ENCODE measurements at regions of chr10 and their contacts with region 1.

Region 1: GRCh38 chr10:22648547-22648961 is 65.8 kb downstream of the PIP4K2A start:
- DNase-seq: peak in 3 of 14 experiments; percentile 50 to 60 (median 53)
- ATAC-seq: no peak
- H3K4me3 ChIP-seq: no peak overlapping the region
- H3K4me3 Mint-ChIP-seq: peak overlapping the region; percentile 68
- H3K27ac ChIP-seq: peak overlapping the region; percentile 55 to 58
- H3K27ac Mint-ChIP-seq: peak overlapping the region; percentile 91
- H3K4me1 ChIP-seq: peaks cover 91% of the 10 kb centered on the region
- H3K4me1 Mint-ChIP-seq: peaks cover 91% of the 10 kb centered on the region
- H3K27me3 ChIP-seq: no peaks in the 10 kb centered on the region
- H3K27me3 Mint-ChIP-seq: no peaks in the 10 kb centered on the region
- CTCF ChIP-seq: no peak

Region 2: GRCh38 chr10:22630234-22631174 is 18.1 kb before region 1 on chr10:
- CTCF ChIA-PET with region 1: interaction called, 6 read pairs
- POLR2A ChIA-PET with region 1: interaction called, 24 read pairs
- intact Hi-C with region 1: loop called in 1 of 2 experiments (anchors 2 kb)
- DNase-seq: peak in 4 of 14 experiments; percentile 55 to 89 (median 86)
- ATAC-seq: peak; percentile 87
- H3K4me3 ChIP-seq: peak overlapping the region; percentile 42
- H3K4me3 Mint-ChIP-seq: peak overlapping the region; percentile 63
- H3K27ac ChIP-seq: peak overlapping the region; percentile 82 to 87
- H3K27ac Mint-ChIP-seq: peak overlapping the region; percentile 90
- H3K4me1 ChIP-seq: peaks cover 67% of the 10 kb centered on the region
- H3K4me1 Mint-ChIP-seq: peaks cover 99% of the 10 kb centered on the region
- H3K27me3 ChIP-seq: no peaks in the 10 kb centered on the region
- H3K27me3 Mint-ChIP-seq: no peaks in the 10 kb centered on the region
- CTCF ChIP-seq: no peak